HepG2 (cell line): ENCODE measurements at regions of chr2 and their contacts with region 1.

Region 1: GRCh38 chr2:205766779-205767359 is 84.6 kb downstream of the NRP2 start:
- DNase-seq: peak; percentile 55
- ATAC-seq: peak; percentile 42; the same call in 1 of the 3 replicates
- H3K4me3 ChIP-seq: no peak overlapping the region
- H3K27ac ChIP-seq: no peak overlapping the region
- H3K4me1 ChIP-seq: no peaks in the 10 kb centered on the region
- H3K27me3 ChIP-seq: no peaks in the 10 kb centered on the region; a peak in 3 of 5 replicates
- CTCF ChIP-seq: peak; percentile 83
- EP300 ChIP-seq: no peak
- POLR2A ChIP-seq: no peak
- RAD21 ChIP-seq: peak; percentile 38; the same call in 1 of the 2 replicates

Region 2: DNA sequence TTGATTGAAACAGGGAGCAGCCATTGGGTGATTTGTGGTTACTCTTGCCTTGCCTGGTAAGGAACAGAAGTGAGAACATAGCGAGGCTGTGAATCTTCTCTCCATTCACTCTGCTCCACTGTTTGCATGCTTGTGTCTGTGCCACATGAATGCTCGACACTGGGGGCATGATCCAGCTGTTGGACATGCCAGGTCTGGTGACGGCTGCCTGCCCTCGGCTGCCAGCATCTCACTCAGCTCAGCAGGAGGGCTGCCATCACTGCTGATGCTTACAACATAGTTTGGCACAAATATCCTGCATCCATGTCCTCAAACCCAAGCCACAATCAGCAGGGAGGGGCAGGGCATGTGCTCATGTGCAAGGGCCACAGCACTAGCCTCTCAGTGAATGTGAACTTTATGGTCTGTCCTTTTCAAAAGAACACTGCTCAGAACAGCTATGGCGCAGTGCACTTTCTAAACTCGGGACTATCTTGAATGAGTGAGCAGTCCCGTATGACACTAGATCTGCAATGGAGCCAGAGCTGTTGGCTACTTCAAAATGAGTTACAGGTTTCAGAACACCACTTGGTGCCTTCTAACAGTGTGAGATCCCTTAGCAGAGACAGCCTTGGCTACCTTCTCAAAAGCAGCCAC is 41.7 kb after region 1 on chr2:
- CTCF ChIA-PET with region 1: interaction called, 14 read pairs
- POLR2A ChIA-PET with region 1: no interaction called
- in situ Hi-C with region 1: no loop called
- intact Hi-C with region 1: loop called (anchors 1 kb)
- DNase-seq: no peak
- ATAC-seq: no peak
- H3K4me3 ChIP-seq: no peak overlapping the region
- H3K27ac ChIP-seq: no peak overlapping the region
- H3K4me1 ChIP-seq: peaks cover 17% of the 10 kb centered on the region
- H3K27me3 ChIP-seq: peaks cover 3 to 34% of the 10 kb centered on the region in 2 experiments; a peak in 4 of 5 replicates
- CTCF ChIP-seq: no peak
- EP300 ChIP-seq: no peak
- POLR2A ChIP-seq: no peak
- RAD21 ChIP-seq: no peak

Region 3: DNA sequence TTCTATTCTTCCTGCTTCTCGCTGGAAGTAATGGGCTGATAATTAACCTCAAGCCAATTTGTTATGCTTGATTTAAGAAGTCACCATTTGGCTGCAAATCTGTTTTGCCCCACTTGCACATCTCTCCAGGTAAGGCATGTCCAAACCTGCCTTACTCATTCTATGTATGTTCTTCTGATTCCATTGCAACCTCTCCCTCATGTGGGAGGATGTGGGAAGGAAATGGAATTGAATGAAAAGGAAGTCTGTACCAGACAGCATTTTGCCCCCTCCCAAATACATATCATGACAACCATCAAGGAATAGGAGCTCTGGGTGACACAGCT is 47.1 kb after region 1 on chr2:
- CTCF ChIA-PET with region 1: interaction called, 14 read pairs
- POLR2A ChIA-PET with region 1: no interaction called
- in situ Hi-C with region 1: no loop called
- intact Hi-C with region 1: loop called (anchors 1 kb)
- DNase-seq: no peak
- ATAC-seq: no peak
- H3K4me3 ChIP-seq: no peak overlapping the region
- H3K27ac ChIP-seq: no peak overlapping the region
- H3K4me1 ChIP-seq: no peaks in the 10 kb centered on the region
- H3K27me3 ChIP-seq: 0 out of 5 replicates have a peak, but pooled peaks cover 0 to 1% of the 10 kb centered on the region in 2 experiments
- CTCF ChIP-seq: no peak
- EP300 ChIP-seq: no peak
- POLR2A ChIP-seq: no peak
- RAD21 ChIP-seq: no peak

Region 4: GRCh38 chr2:205885492-205886099 is 118.7 kb after region 1 on chr2:
- CTCF ChIA-PET with region 1: interaction called, 5 read pairs
- POLR2A ChIA-PET with region 1: no interaction called
- in situ Hi-C with region 1: no loop called
- intact Hi-C with region 1: loop called (anchors 2 kb)
- DNase-seq: peak; percentile 65
- ATAC-seq: peak; percentile 99
- H3K4me3 ChIP-seq: no peak overlapping the region
- H3K27ac ChIP-seq: no peak overlapping the region
- H3K4me1 ChIP-seq: no peaks in the 10 kb centered on the region
- H3K27me3 ChIP-seq: peaks cover 0 to 3% of the 10 kb centered on the region in 2 experiments; a peak in 1 of 5 replicates
- CTCF ChIP-seq: peak; percentile 97
- EP300 ChIP-seq: no peak
- POLR2A ChIP-seq: no peak
- RAD21 ChIP-seq: peak; percentile 97